ENCODE measurements at regions of chrX and their contacts with region 1.

Region 1: GRCh38 chrX:20252381-20253231 is 14.1 kb downstream of the RPS6KA3 start:
- H3K4me3 Mint-ChIP-seq: no peak overlapping the region
- H3K27ac Mint-ChIP-seq: no peak overlapping the region
- H3K4me1 Mint-ChIP-seq: peaks cover 19% of the 10 kb centered on the region
- H3K27me3 Mint-ChIP-seq: no peaks in the 10 kb centered on the region

Region 2: DNA sequence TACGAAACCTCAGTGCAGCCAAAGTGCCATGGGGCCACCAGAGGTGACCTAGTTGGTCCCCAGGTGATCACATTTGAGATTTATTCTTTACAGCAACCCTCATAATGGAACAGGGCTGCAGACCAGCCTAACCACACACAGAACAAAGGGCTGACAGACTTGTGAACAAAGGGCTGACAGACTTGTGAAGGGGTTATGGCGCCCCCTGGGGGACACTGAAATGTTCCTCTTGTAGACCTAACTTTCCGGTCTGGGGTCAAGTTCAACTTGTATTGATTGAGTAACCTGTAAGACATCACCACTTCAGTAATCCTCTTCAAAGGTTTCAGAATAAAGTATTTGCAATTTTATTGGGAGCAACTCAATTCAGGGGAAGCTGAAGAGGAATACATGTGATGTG is 190.0 kb after region 1 on chrX:
- intact Hi-C with region 1: loop called (anchors 1 kb)
- H3K4me3 Mint-ChIP-seq: no peak overlapping the region
- H3K27ac Mint-ChIP-seq: no peak overlapping the region
- H3K4me1 Mint-ChIP-seq: no peaks in the 10 kb centered on the region
- H3K27me3 Mint-ChIP-seq: no peaks in the 10 kb centered on the region